CD14-positive monocyte (primary cell): ENCODE measurements at regions of chr6 and their contacts with region 1.

Region 1: DNA sequence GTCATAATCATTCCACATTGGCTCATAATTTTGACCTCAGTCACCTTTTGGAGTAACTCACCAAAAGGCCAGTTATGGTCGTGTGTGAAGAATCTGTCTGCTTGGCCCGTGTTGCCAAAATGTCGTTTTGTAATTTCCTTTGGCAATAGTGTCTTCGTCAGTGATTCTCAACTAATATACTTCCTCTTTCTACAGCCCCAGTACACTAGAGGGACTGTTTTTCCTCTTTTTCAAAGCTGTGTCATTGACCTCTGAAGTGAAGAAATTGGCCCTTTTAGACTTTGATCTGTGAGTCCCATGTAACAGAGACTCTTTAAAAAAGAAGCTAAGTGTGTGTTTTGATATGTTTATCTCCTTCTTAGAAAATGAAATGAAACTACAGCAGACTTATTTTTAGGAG is 5.2 kb downstream of the FOXO3 start:
- DNase-seq: peak; percentile 96 to 99 (median 99)
- H3K4me3 ChIP-seq: peak overlapping the region in 2 of 3 experiments; percentile 24 to 100
- H3K4me3 Mint-ChIP-seq: peak overlapping the region; percentile 64 to 68
- H3K27ac ChIP-seq: peak overlapping the region; percentile 86 to 98
- H3K27ac Mint-ChIP-seq: peak overlapping the region; percentile 97 to 99 (median 98)
- H3K4me1 ChIP-seq: peaks cover 69 to 76% of the 10 kb centered on the region in 2 donors
- H3K4me1 Mint-ChIP-seq: peaks cover 67% of the 10 kb centered on the region
- H3K27me3 ChIP-seq: no peaks in the 10 kb centered on the region
- H3K27me3 Mint-ChIP-seq: peaks cover 0 to 9% (median 2%) of the 10 kb centered on the region in 3 donors
- CTCF ChIP-seq: no peak

Region 2: GRCh38 chr6:108589287-108589791 is 23.4 kb after region 1 on chr6:
- intact Hi-C with region 1: no loop called
- DNase-seq: peak; percentile 40 to 84 (median 51)
- H3K4me3 ChIP-seq: peak overlapping the region in 1 of 3 experiments; percentile 36
- H3K4me3 Mint-ChIP-seq: peak overlapping the region in 1 of 2 donors; percentile 24
- H3K27ac ChIP-seq: peak overlapping the region; percentile 62 to 79
- H3K27ac Mint-ChIP-seq: peak overlapping the region; percentile 73 to 90 (median 78)
- H3K4me1 ChIP-seq: peaks cover 47 to 71% of the 10 kb centered on the region in 2 donors
- H3K4me1 Mint-ChIP-seq: peaks cover 78% of the 10 kb centered on the region
- H3K27me3 ChIP-seq: no peaks in the 10 kb centered on the region
- H3K27me3 Mint-ChIP-seq: peaks cover 0 to 3% (median 2%) of the 10 kb centered on the region in 3 donors
- CTCF ChIP-seq: no peak

Region 3: DNA sequence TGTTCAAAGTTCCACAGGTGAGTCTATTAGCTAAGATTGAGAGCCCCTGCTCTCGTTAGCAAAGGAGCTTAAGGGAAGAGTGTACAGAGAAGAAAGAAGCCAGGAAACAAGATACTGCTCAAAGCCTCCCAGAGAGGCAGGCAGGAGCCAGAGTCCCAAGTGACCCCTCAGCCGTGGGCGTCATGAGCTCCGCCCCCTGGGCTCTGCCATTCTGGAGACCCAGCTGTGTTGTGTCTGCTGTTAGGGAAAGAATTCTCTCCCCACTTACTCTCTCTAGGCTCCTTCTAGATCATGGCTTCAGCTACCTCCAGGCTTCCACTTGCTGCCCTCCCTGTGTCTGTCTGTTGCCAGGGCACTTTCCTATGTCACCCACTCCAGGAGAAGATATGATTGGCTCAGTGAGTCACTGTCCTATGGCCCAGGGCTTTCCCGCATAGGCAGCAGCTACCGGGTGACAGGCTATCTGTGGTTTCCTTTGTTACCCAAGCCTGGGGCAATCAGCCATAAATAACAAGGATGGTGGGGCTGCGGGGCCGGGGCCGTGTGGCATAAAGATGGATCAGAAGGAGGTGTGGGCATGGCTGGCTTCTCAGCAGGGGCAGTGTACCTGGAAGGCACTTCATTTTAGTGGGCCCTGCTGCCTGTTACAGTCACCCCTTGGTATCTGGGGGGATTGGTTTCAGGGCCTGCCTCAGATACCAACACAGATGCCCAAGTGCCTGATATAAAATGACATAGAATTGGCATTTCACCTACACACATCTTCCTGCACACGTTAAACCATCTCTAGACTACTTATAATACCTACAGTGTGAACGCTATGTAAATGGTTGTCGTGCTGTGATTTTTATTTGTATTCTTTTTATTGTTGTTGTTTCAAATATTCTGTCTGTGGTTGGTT is 401.2 kb after region 1 on chr6:
- intact Hi-C with region 1: loop called in 1 of 2 experiments (anchors 5 kb)
- DNase-seq: peak; percentile 87 to 98 (median 88)
- H3K4me3 ChIP-seq: peak overlapping the region in 1 of 3 experiments; percentile 31
- H3K4me3 Mint-ChIP-seq: peak overlapping the region; percentile 16 to 79
- H3K27ac ChIP-seq: peak overlapping the region; percentile 18 to 59
- H3K27ac Mint-ChIP-seq: peak overlapping the region; percentile 78 to 95 (median 87)
- H3K4me1 ChIP-seq: peaks cover 33 to 34% of the 10 kb centered on the region in 2 donors
- H3K4me1 Mint-ChIP-seq: peaks cover 33% of the 10 kb centered on the region
- H3K27me3 ChIP-seq: no peaks in the 10 kb centered on the region
- H3K27me3 Mint-ChIP-seq: peaks cover 0 to 3% (median 2%) of the 10 kb centered on the region in 3 donors
- CTCF ChIP-seq: no peak